Ascending aorta (tissue), 2 donors: ENCODE measurements at regions of chr6 and their contacts with region 1.

Region 1: GRCh38 chr6:112043032-112044007 is 10.6 kb upstream of the CCN6 start:
- DNase-seq: peak; percentile 41 to 94
- H3K4me3 ChIP-seq: peak overlapping the region; percentile 69 to 70
- H3K27ac ChIP-seq: peak overlapping the region; percentile 69 to 87
- H3K4me1 ChIP-seq: peaks cover 2 to 19% of the 10 kb centered on the region in 2 donors
- H3K27me3 ChIP-seq: no peaks in the 10 kb centered on the region
- CTCF ChIP-seq: peak; percentile 90 to 98 (median 97)

Region 2: GRCh38 chr6:111259089-111259831 is 784.1 kb before region 1 on chr6:
- intact Hi-C with region 1: loop called (anchors 2 kb)
- DNase-seq: peak; percentile 96 to 99
- H3K4me3 ChIP-seq: peak overlapping the region; percentile 63 to 90
- H3K27ac ChIP-seq: peak overlapping the region; percentile 78 to 87
- H3K4me1 ChIP-seq: peaks cover 0 to 11% of the 10 kb centered on the region in 2 donors
- H3K27me3 ChIP-seq: no peaks in the 10 kb centered on the region
- CTCF ChIP-seq: peak; percentile 92 to 96 (median 94)

Region 3: GRCh38 chr6:111709615-111710398 is 333.5 kb before region 1 on chr6:
- intact Hi-C with region 1: loop called (anchors 1 kb)
- DNase-seq: peak in 1 of 2 donors; percentile 78
- H3K4me3 ChIP-seq: peak overlapping the region in 1 of 2 donors; percentile 46
- H3K27ac ChIP-seq: no peak overlapping the region
- H3K4me1 ChIP-seq: peaks cover 0 to 6% of the 10 kb centered on the region in 2 donors
- H3K27me3 ChIP-seq: no peaks in the 10 kb centered on the region
- CTCF ChIP-seq: peak; percentile 58 to 79 (median 77)

Region 4: GRCh38 chr6:111873178-111874024 is 169.9 kb before region 1 on chr6 and contains the start of gene FYN:
- intact Hi-C with region 1: loop called (anchors 1 kb)
- DNase-seq: peak; percentile 93 to 99
- H3K4me3 ChIP-seq: peak within 1 kb of the TSS; percentile 79 to 83
- H3K27ac ChIP-seq: peak within 1 kb of the TSS; percentile 67 to 74
- H3K4me1 ChIP-seq: peaks cover 0 to 5% of the 10 kb centered on the region in 2 donors
- H3K27me3 ChIP-seq: no peaks in the 10 kb centered on the region
- CTCF ChIP-seq: peak; percentile 39 to 72 (median 53)
- total RNA-seq, gene FYN: 141 TPM

Region 5: DNA sequence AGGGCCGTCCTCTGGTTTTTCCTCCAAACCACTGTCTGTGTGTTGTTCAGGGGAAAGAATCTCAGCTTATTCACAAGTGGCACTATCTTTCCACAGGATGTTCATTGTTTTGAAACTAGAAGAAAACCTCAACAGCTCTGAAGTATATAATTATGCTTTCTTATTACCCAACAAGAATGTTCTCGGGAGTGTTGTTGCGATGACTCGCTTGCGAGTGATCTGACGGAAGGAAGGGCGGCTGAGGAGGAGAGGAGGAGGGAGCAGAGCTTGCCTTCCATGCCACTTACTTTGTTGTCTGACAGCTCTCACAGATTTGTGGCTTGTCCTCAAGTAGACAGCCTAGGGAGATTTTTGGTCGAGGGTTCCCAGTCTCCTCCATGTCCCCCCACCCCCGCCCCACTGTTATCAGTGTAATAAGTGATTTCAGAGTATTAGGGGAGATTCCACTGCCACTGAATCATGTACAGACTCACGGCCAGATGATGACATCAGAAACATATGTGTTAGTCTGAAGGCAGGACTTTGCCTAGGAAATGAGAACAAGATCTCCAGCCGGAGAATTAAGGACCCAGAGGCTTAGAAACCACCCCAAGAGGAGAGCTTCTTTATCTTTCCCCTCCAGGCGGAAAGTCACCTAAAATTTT is 70.1 kb before region 1 on chr6:
- intact Hi-C with region 1: loop called (anchors 2 kb)
- DNase-seq: peak; percentile 16 to 83
- H3K4me3 ChIP-seq: peak overlapping the region; percentile 14 to 37
- H3K27ac ChIP-seq: peak overlapping the region; percentile 54 to 59
- H3K4me1 ChIP-seq: peaks cover 2 to 5% of the 10 kb centered on the region in 2 donors
- H3K27me3 ChIP-seq: no peaks in the 10 kb centered on the region
- CTCF ChIP-seq: no peak

Region 6: GRCh38 chr6:111997078-111997852 is 46.1 kb before region 1 on chr6:
- intact Hi-C with region 1: loop called (anchors 1 kb)
- DNase-seq: peak in 1 of 2 donors; percentile 83
- H3K4me3 ChIP-seq: peak overlapping the region in 1 of 2 donors; percentile 6
- H3K27ac ChIP-seq: peak overlapping the region in 1 of 2 donors; percentile 51
- H3K4me1 ChIP-seq: no peaks in the 10 kb centered on the region
- H3K27me3 ChIP-seq: no peaks in the 10 kb centered on the region
- CTCF ChIP-seq: peak; percentile 85 to 89 (median 88)

Region 7: GRCh38 chr6:113089056-113089455 is 1045.7 kb after region 1 on chr6:
- intact Hi-C with region 1: no loop called
- DNase-seq: no peak
- H3K4me3 ChIP-seq: no peak overlapping the region
- H3K27ac ChIP-seq: no peak overlapping the region
- H3K4me1 ChIP-seq: no peaks in the 10 kb centered on the region
- H3K27me3 ChIP-seq: no peaks in the 10 kb centered on the region
- CTCF ChIP-seq: no peak